ENCODE measurements at regions of chr7 and their contacts with region 1.

Region 1: DNA sequence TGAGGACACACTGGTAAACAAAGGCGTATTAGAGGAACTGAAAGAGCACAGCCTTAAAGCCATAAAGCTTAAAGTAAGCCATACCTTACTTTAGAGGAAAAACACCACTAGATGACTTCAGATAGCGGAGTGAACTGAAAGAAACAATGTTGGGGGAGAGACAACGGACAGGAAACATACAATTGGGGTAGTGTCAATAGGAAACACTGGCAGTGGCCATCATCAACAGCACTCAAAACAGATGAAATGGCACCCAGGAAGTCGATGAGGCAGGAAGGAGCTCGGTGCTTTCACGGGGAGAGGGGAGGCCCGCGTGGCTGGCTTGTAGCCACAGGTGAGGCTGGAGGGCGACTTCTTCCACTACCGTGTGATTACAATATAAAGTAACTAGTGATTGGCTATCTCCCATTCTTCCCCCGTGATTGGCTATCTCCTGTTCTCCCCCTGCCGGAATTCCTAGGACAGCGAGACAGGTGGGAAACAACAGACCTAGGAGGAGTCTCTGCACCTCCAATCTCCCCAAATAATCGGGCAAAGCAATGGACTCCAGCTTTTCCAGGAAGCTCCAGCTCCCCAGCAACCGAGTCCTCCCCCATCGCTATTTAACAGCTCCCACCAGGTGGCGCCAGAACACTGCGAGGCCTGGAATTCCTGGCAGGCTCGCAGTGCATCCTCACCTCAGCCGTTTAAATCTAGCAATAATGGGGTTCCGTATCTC is 2.4 kb upstream of the TAS2R38 start:
- DNase-seq: peak; percentile 76 to 89 (median 87)
- ATAC-seq: peak; percentile 97
- H3K4me3 ChIP-seq: no peak overlapping the region
- H3K4me1 ChIP-seq: peaks cover 2% of the 10 kb centered on the region
- CTCF ChIP-seq: peak; percentile 77

Region 2: DNA sequence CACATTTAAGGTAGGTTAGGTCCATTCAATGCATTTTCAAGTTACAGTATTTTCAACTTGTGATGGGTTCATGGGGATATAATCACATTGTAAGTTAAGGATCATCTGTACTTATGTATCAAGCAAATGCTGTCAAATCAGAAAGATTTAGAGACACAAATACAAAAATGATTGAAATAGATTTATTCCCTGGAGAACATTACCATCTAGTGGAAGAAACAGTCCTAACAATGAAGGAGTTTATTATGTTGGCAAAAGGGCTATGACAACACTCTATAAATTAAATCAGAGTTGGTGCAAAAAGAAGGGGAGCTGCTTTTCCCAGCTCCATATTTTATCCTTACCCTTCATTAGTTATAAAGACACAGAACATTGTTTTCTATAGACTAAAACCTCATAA is 212.9 kb after region 1 on chr7:
- intact Hi-C with region 1: loop called in 1 of 2 experiments (anchors 5 kb)
- DNase-seq: no peak
- ATAC-seq: no peak
- H3K4me3 ChIP-seq: no peak overlapping the region
- H3K4me1 ChIP-seq: no peaks in the 10 kb centered on the region
- CTCF ChIP-seq: no peak